Left ventricle myocardium inferior (tissue), 1 donor: ENCODE measurements at regions of chrX and their contacts with region 1.

Region 1: GRCh38 chrX:13750204-13750603 is 15.7 kb downstream of the OFD1 start:
- DNase-seq: no peak
- H3K4me3 ChIP-seq: no peak overlapping the region
- H3K27ac ChIP-seq: no peak overlapping the region
- H3K4me1 ChIP-seq: no peaks in the 10 kb centered on the region
- H3K27me3 ChIP-seq: no peaks in the 10 kb centered on the region
- CTCF ChIP-seq: peak; percentile 62

Region 2: GRCh38 chrX:13533726-13534125 is 216.5 kb before region 1 on chrX:
- intact Hi-C with region 1: no loop called
- DNase-seq: no peak
- H3K4me3 ChIP-seq: no peak overlapping the region
- H3K27ac ChIP-seq: no peak overlapping the region
- H3K4me1 ChIP-seq: no peaks in the 10 kb centered on the region
- H3K27me3 ChIP-seq: no peaks in the 10 kb centered on the region
- CTCF ChIP-seq: no peak

Region 3: DNA sequence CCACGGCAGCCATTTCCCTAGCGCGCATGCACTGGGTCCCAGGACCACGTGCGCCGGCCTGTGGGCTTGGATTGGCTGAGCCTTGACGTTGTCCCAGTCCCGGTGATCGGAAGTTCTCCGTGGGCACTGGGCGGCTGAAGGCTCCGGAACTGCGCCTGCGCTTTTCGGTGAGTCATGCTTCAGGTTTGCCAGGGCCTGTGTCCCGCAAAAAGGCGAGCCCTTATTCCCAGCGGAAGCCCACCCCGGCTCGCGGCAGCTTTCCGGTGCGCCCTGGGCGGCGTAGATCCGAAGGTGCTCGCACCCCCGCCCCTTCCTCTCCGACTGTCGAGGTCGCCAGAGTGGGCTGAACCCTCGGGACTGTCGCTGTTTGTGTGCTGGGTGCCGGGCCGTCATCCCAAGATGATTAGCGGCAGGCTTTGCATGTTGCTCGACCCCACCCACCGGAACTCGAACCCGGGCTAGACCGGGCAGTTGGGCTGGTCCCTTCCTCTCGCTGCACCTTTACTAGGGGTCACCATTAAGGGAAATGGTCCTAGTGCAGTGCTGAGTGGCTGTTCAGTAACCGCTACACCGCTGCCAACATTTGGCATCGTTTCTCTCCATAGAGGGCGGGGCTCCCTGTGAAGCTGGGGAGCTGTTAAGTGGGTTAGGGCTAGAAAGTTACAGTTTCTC is 97.0 kb before region 1 on chrX and contains the start of gene TCEANC:
- intact Hi-C with region 1: loop called (anchors 10 kb)
- DNase-seq: peak; percentile 94
- H3K4me3 ChIP-seq: peak within 1 kb of the TSS; percentile 71
- H3K27ac ChIP-seq: peak within 1 kb of the TSS; percentile 96
- H3K4me1 ChIP-seq: peaks cover 14% of the 10 kb centered on the region
- H3K27me3 ChIP-seq: no peaks in the 10 kb centered on the region
- CTCF ChIP-seq: no peak
- total RNA-seq, gene TCEANC: 7.9 TPM